ENCODE measurements at regions of chr16 and their contacts with region 1.

Region 1: GRCh38 chr16:58148526-58148925 is 19.3 kb upstream of the CFAP20 start:
- DNase-seq: no peak
- ATAC-seq: no peak

Region 2: DNA sequence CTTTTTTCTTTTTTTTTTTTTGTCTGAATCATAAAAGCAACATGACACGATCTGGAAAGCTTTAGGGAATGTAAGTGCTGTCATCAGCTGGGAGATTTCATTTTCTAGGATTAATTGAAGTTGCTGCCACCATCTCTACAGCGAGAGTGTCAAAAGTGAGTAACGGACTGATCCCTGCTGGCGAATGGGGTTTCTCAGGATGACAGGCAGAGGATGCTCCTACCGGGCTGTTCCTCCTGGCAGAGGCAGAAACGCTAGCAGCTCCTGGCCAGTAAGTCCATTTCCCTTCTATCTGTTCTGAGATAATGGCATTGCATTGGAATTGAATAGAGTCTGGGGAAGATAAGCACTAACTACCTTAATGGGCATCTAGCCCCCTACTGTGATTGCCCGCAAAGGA is 265.7 kb before region 1 on chr16:
- intact Hi-C with region 1: loop called (anchors 5 kb)
- DNase-seq: no peak
- ATAC-seq: no peak

Region 3: GRCh38 chr16:58000706-58001676 is 147.5 kb before region 1 on chr16 and contains the start of gene USB1:
- intact Hi-C with region 1: no loop called
- DNase-seq: peak; percentile 94
- ATAC-seq: peak; percentile 94
- total RNA-seq, gene USB1: 28.3 TPM